Naive thymus-derived CD4-positive, alpha-beta T cell (primary cell): ENCODE measurements at regions of chr1 and their contacts with region 1.

Region 1: DNA sequence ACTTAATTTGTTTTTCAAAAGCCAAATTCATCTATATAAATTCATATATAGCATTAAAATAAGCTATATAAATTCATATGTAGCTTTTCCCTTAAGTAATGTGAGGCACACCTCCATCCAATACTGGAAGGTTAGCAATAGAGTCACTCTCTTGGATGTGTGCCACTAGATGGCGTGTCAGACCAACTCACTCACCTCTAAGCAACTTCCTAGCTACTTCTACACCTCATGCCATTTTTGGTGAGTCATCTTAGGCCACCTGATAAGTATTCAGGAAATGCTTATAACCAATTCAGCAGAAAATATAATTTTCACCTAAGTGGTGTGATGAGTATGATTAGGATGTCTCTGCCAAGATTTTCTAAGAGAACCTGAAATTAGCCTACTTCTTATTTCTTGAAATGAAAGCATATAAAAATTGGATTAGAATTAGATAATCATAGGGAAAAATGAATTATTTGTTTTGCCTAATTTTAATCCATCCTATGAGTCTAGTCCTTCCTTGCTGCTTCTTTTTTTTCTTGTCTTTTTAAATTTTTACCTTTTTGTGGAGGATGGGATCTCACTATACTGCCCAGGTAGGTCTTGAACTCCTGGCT is 34.4 kb upstream of the TADA1 start:
- DNase-seq: peak; percentile 21 to 80 (median 74)
- ATAC-seq: peak; percentile 99
- H3K4me3 ChIP-seq: no peak overlapping the region
- H3K4me3 Mint-ChIP-seq: no peak overlapping the region
- H3K27ac ChIP-seq: no peak overlapping the region
- H3K27ac Mint-ChIP-seq: peak overlapping the region in 1 of 9 donors; percentile 12
- H3K4me1 ChIP-seq: no peaks in the 10 kb centered on the region
- H3K4me1 Mint-ChIP-seq: peaks cover 0 to 31% (median 4%) of the 10 kb centered on the region in 7 donors
- H3K27me3 ChIP-seq: no peaks in the 10 kb centered on the region
- H3K27me3 Mint-ChIP-seq: peaks cover 0 to 6% (median 0%) of the 10 kb centered on the region in 5 donors

Region 2: DNA sequence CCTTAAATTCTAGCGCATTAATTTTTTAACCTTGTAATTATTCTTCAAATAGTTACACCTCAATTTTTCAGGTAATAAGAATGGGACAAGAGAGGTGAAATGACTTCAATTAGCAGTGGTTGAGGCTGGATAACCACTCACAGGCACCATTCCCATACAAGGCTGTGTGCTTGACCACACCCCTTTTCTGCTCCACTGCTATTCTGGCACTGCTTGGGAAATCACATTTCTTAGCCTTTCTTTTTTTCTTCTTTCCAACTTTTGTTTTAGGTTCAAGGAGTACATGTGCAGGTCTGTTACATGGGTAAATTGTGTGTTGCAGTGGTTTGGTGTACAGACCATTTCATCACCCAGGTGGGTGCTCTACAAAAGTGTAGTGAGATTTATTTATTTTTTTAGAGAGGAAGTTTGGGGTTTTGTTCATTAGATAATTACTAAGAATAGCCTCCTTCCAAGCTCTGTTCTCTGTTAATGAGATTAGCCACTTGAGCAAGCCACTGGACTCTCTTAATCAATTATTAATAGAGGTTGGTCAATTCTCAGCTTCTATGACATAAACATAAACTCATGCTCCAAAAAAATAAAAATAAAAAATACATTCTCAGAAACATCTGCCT is 50.5 kb after region 1 on chr1:
- CTCF ChIA-PET with region 1: no interaction called
- POLR2A ChIA-PET with region 1: no interaction called
- intact Hi-C with region 1: no loop called
- DNase-seq: no peak
- ATAC-seq: no peak
- H3K4me3 ChIP-seq: no peak overlapping the region
- H3K4me3 Mint-ChIP-seq: no peak overlapping the region
- H3K27ac ChIP-seq: no peak overlapping the region
- H3K27ac Mint-ChIP-seq: no peak overlapping the region
- H3K4me1 ChIP-seq: no peaks in the 10 kb centered on the region
- H3K4me1 Mint-ChIP-seq: peaks cover 0 to 4% (median 0%) of the 10 kb centered on the region in 7 donors
- H3K27me3 ChIP-seq: no peaks in the 10 kb centered on the region
- H3K27me3 Mint-ChIP-seq: peaks cover 0 to 23% (median 7%) of the 10 kb centered on the region in 5 donors

Region 3: DNA sequence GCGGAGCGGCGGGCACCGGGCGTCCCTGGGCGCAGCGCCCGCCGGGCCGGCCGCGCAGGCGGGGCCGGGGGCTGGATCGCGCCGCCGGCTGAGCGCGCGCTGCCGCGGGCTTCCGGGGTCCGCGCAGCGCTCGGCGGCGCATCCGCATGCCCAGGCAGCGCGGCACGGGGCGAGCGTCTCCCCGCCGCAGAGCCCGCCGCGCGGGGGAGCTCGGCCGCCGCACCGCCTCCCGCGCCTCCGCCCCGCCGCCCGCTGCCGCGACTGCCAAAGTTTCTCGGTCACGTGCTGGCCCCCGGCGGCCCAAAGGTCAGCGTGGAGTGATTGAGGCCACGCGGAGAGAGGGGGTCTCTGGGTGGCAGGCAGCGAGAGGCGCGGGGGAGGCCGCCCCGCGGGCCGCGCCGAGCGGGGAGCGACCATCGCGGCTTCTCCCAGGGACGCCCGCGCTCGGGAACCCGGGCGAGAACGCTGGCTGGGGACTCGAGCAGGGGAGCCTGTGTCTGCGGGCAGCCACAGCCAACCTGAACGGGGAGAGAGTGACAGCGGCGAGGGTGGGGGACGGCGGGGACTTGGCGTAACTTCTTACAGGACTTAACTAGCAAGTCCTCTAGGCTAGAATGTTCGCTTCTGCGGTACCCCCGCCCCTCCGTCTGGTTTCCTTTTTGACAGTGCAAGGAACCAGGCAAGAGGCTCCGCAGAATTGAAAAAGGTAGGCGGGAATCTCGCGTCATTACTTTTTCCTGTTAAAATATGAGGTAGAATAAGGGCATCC is 65.0 kb after region 1 on chr1 and contains the start of gene ILDR2:
- CTCF ChIA-PET with region 1: interaction called, 6 read pairs
- POLR2A ChIA-PET with region 1: no interaction called
- intact Hi-C with region 1: loop called (anchors 2 kb)
- DNase-seq: peak; percentile 25 to 72 (median 44)
- ATAC-seq: peak; percentile 88
- H3K4me3 ChIP-seq: peak within 1 kb of the TSS; percentile 71
- H3K4me3 Mint-ChIP-seq: peak within 1 kb of the TSS; percentile 73 to 98 (median 88)
- H3K27ac ChIP-seq: peak within 1 kb of the TSS; percentile 54
- H3K27ac Mint-ChIP-seq: peak within 1 kb of the TSS; percentile 30 to 84 (median 51)
- H3K4me1 ChIP-seq: peaks cover 4 to 9% of the 10 kb centered on the region in 2 donors
- H3K4me1 Mint-ChIP-seq: peaks cover 19 to 46% (median 24%) of the 10 kb centered on the region in 7 donors
- H3K27me3 ChIP-seq: peaks cover 0 to 5% of the 10 kb centered on the region in 2 donors
- H3K27me3 Mint-ChIP-seq: peaks cover 13 to 31% (median 24%) of the 10 kb centered on the region in 5 donors
- total RNA-seq, gene ILDR2: 0.15 to 10.0 (median 0.29) TPM

Region 4: DNA sequence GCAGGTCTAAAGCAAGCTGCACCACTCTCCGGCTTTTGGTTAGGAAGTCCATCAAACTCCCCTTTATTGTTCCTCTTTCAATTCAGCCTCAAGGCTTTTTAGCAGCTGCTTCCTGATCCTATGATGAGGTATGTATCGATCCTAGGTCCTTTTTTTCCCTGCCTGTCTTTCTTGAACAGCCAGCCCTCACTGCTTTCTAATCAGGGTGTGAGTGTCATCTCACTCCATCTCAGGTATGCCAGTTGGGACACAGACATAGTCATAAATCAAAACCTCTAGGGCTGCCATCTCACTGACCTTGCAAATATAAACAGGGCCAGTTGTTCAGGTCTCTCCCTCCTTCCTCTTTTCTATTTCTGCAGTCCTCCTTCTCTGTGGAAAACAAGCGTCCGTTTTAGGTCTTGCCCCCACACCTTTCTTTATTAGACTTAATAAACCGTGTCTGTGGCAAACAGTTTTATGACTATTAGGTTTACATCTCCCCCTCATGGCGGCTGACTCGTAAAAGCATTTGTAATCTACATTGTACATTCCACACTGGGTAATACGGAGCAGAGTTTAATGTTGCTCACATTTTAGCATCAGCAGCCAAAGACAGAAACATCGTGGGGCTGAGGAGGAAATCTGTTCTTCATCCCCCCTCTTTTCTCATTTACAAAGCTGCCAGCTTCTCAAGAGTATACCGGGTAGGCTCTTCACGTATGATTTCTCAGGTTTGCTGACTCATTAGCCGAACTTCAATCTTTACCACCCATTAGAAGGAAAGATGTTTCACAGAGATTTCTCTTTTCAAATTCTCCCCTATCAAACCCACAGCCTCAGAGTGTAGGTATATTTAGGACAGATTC is 195.0 kb after region 1 on chr1:
- CTCF ChIA-PET with region 1: interaction called, 12 read pairs
- POLR2A ChIA-PET with region 1: no interaction called
- intact Hi-C with region 1: no loop called
- DNase-seq: no peak
- ATAC-seq: no peak
- H3K4me3 ChIP-seq: no peak overlapping the region
- H3K4me3 Mint-ChIP-seq: peak overlapping the region in 7 of 10 donors; percentile 1 to 58 (median 13)
- H3K27ac ChIP-seq: no peak overlapping the region
- H3K27ac Mint-ChIP-seq: peak overlapping the region in 8 of 9 donors; percentile 23 to 87 (median 62)
- H3K4me1 ChIP-seq: peaks cover 5 to 29% of the 10 kb centered on the region in 2 donors
- H3K4me1 Mint-ChIP-seq: peaks cover 40 to 60% (median 56%) of the 10 kb centered on the region in 7 donors
- H3K27me3 ChIP-seq: no peaks in the 10 kb centered on the region
- H3K27me3 Mint-ChIP-seq: peaks cover 0 to 5% (median 0%) of the 10 kb centered on the region in 5 donors

Region 5: GRCh38 chr1:167141963-167142362 is 231.5 kb after region 1 on chr1:
- CTCF ChIA-PET with region 1: no interaction called
- POLR2A ChIA-PET with region 1: no interaction called
- intact Hi-C with region 1: no loop called
- DNase-seq: no peak
- ATAC-seq: no peak
- H3K4me3 ChIP-seq: no peak overlapping the region
- H3K4me3 Mint-ChIP-seq: no peak overlapping the region
- H3K27ac ChIP-seq: no peak overlapping the region
- H3K27ac Mint-ChIP-seq: no peak overlapping the region
- H3K4me1 ChIP-seq: no peaks in the 10 kb centered on the region
- H3K4me1 Mint-ChIP-seq: no peaks in the 10 kb centered on the region
- H3K27me3 ChIP-seq: no peaks in the 10 kb centered on the region
- H3K27me3 Mint-ChIP-seq: peaks cover 0 to 53% (median 15%) of the 10 kb centered on the region in 5 donors

Region 6: DNA sequence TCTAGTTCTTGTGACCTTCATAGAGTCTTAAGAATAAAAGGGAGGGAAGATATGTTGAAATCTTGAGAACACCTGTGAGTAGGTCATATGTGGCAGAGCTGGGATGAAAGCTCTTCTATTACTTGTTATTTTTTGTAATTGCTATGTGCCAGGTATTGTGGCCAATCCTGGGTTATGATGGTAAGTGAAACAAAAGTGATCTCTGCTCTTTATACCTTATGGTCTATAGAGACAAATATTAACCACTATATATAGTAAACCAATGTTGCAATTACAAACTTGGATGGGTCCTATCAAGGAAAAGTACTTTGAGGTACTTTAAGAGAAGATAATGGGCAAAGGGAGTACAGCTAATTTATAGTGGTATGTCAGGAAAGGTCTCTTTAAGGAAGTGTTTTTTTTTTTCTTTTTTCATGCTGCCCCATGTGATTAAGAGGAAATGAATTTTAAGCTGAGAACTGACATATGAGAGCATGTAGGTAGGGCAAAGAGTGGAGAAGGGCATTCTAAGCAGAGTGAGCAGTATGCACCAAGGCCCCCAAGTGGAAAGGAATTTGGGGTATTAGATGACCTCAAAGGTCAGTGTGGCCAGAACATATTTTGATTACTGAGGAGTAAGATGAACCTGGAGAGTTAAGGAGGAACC is 353.4 kb after region 1 on chr1:
- CTCF ChIA-PET with region 1: interaction called, 3 read pairs
- POLR2A ChIA-PET with region 1: no interaction called
- intact Hi-C with region 1: loop called in 1 of 2 experiments (anchors 5 kb)
- DNase-seq: peak in 6 of 9 donors; percentile 5 to 28 (median 14)
- ATAC-seq: peak; percentile 42
- H3K4me3 ChIP-seq: no peak overlapping the region
- H3K4me3 Mint-ChIP-seq: no peak overlapping the region
- H3K27ac ChIP-seq: no peak overlapping the region
- H3K27ac Mint-ChIP-seq: no peak overlapping the region
- H3K4me1 ChIP-seq: peaks cover 12 to 29% of the 10 kb centered on the region in 2 donors
- H3K4me1 Mint-ChIP-seq: peaks cover 20 to 40% (median 35%) of the 10 kb centered on the region in 7 donors
- H3K27me3 ChIP-seq: no peaks in the 10 kb centered on the region
- H3K27me3 Mint-ChIP-seq: no peaks in the 10 kb centered on the region

Region 7: DNA sequence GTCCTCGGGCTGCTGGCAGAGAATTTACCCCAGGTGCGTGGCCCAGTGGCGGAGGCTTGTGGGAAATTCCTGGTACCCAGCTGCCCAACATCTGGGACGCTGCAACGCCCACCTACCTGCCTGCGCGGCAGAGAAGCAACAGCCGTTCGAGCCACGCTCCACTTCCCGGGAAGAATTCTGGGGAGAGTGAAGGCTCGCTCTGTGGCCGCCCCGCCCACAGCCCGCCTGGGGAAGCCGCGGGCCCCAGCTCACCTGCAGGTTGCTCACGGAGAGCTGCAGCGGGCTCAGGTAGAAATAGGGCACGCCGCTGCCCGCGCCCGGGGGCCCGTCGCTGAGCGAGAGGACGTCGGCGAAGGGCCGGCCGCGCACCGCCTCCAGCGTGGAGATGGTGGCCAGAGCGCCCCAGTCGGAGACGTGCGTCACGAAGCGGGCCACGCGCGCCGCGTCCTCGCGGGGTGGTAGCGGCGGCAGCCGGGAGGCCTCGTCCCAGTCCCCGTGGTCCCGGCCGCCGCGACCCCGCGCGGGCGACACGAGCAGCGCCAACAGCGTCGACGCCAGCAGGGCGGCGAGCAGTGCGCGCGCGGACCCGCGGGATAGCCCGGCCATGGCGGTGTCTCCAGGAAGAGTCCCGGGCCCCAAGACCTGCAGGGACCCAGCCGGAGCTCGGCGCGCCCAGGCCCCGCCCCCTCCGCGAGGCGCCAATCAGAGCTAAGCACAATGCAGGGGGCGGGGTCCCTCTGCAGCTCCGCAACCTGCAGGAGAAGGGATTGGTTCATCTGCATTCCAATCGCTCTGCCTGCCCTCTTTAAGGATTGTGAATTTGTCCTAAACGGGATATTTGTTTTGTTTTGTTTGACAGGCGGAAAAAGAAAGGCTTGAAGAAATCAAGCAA is 642.9 kb after region 1 on chr1 and contains the start of gene CREG1:
- CTCF ChIA-PET with region 1: no interaction called
- POLR2A ChIA-PET with region 1: no interaction called
- intact Hi-C with region 1: loop called in 1 of 2 experiments (anchors 5 kb)
- DNase-seq: peak; percentile 82 to 92 (median 88)
- ATAC-seq: peak; percentile 98
- H3K4me3 ChIP-seq: peak within 1 kb of the TSS; percentile 71
- H3K4me3 Mint-ChIP-seq: peak within 1 kb of the TSS; percentile 85 to 97 (median 92)
- H3K27ac ChIP-seq: peak within 1 kb of the TSS; percentile 72
- H3K27ac Mint-ChIP-seq: peak within 1 kb of the TSS; percentile 43 to 88 (median 80)
- H3K4me1 ChIP-seq: peaks cover 19% of the 10 kb centered on the region in 2 donors
- H3K4me1 Mint-ChIP-seq: peaks cover 35 to 58% (median 46%) of the 10 kb centered on the region in 7 donors
- H3K27me3 ChIP-seq: no peaks in the 10 kb centered on the region
- H3K27me3 Mint-ChIP-seq: peaks cover 0 to 4% (median 0%) of the 10 kb centered on the region in 5 donors
- total RNA-seq, gene CREG1: 10.6 to 33.4 (median 23.1) TPM